MCF 10A (cell line): ENCODE measurements at regions of chr14 and their contacts with region 1.

Region 1: GRCh38 chr14:65019944-65020566 is 33.4 kb downstream of the FNTB start:
- DNase-seq: peak; percentile 51
- H3K4me3 Mint-ChIP-seq: no peak overlapping the region
- H3K27ac Mint-ChIP-seq: no peak overlapping the region
- H3K4me1 Mint-ChIP-seq: no peaks in the 10 kb centered on the region
- H3K27me3 Mint-ChIP-seq: no peaks in the 10 kb centered on the region
- CTCF ChIP-seq: peak; percentile 52

Region 2: GRCh38 chr14:64478634-64479250 is 541.3 kb before region 1 on chr14:
- CTCF ChIA-PET with region 1: no interaction called
- POLR2A ChIA-PET with region 1: no interaction called
- intact Hi-C with region 1: no loop called
- DNase-seq: peak; percentile 40
- H3K4me3 Mint-ChIP-seq: no peak overlapping the region
- H3K27ac Mint-ChIP-seq: no peak overlapping the region
- H3K4me1 Mint-ChIP-seq: peaks cover 6% of the 10 kb centered on the region
- H3K27me3 Mint-ChIP-seq: no peaks in the 10 kb centered on the region
- CTCF ChIP-seq: peak; percentile 35

Region 3: GRCh38 chr14:64974563-64974962 is 45.5 kb before region 1 on chr14:
- CTCF ChIA-PET with region 1: no interaction called
- POLR2A ChIA-PET with region 1: no interaction called
- intact Hi-C with region 1: no loop called
- DNase-seq: no peak
- H3K4me3 Mint-ChIP-seq: no peak overlapping the region
- H3K27ac Mint-ChIP-seq: no peak overlapping the region
- H3K4me1 Mint-ChIP-seq: no peaks in the 10 kb centered on the region
- H3K27me3 Mint-ChIP-seq: peaks cover 18% of the 10 kb centered on the region
- CTCF ChIP-seq: no peak

Region 4: DNA sequence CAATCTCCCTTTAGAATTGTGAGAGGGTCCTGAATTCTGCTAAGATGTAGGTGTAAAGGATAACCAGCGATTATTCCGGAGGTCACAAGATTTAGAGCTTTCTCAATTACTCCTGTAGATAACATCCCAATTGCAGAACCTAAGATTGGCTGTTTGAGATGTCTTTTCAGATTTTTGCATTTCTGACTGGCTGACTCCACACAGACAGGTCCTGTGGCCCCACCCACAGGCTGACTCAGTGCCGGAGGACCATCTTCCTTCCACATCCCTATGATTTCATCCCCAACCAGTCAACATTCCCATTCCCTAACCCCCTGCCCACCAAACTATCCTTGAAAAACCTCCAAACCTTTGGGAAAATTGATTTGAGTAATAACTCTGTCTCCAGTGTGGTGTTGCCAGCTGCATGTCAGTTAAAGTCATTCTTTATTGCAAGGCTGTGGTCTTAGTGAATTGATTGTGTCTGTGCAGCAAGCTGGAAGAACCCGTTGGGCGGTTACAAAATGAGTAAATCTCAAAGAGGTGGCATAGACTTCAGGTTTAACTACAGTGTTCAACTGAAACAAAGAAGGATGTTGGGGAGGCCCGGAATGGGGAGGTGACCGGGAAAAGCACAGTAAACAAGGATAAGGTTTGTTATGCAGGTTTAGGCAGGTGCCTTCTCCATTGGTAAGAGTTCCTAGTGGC is 22.8 kb before region 1 on chr14:
- CTCF ChIA-PET with region 1: interaction called, 18 read pairs
- POLR2A ChIA-PET with region 1: interaction called, 4 read pairs
- intact Hi-C with region 1: no loop called
- DNase-seq: no peak
- H3K4me3 Mint-ChIP-seq: no peak overlapping the region
- H3K27ac Mint-ChIP-seq: no peak overlapping the region
- H3K4me1 Mint-ChIP-seq: peaks cover 5% of the 10 kb centered on the region
- H3K27me3 Mint-ChIP-seq: no peaks in the 10 kb centered on the region
- CTCF ChIP-seq: no peak

Region 5: GRCh38 chr14:65002586-65003210 is 17.4 kb before region 1 on chr14:
- CTCF ChIA-PET with region 1: interaction called, 15 read pairs
- POLR2A ChIA-PET with region 1: interaction called, 5 read pairs
- intact Hi-C with region 1: no loop called
- DNase-seq: no peak
- H3K4me3 Mint-ChIP-seq: no peak overlapping the region
- H3K27ac Mint-ChIP-seq: no peak overlapping the region
- H3K4me1 Mint-ChIP-seq: peaks cover 23% of the 10 kb centered on the region
- H3K27me3 Mint-ChIP-seq: no peaks in the 10 kb centered on the region
- CTCF ChIP-seq: no peak

Region 6: DNA sequence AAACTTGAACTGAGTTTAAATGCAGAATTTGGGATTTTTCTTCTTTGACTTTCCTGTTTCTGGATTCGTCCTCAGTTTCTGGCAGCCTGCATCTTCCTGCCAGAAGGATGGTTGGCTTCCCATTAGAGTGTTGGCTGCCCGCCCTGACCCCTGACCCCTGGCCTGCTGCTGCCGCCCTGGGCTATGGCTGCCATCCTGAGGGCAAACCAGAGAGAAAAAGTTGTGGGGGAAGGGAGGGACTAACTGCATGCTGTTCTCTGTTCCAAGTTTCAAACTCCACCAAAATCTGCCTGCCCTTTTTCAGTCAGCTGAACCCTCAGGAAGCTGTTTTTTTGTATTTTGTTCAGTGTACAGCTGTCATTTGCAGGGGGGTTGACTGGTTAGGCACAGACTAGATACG is 15.0 kb after region 1 on chr14:
- CTCF ChIA-PET with region 1: interaction called, 25 read pairs
- POLR2A ChIA-PET with region 1: interaction called, 3 read pairs
- intact Hi-C with region 1: no loop called
- DNase-seq: no peak
- H3K4me3 Mint-ChIP-seq: no peak overlapping the region
- H3K27ac Mint-ChIP-seq: no peak overlapping the region
- H3K4me1 Mint-ChIP-seq: peaks cover 5% of the 10 kb centered on the region
- H3K27me3 Mint-ChIP-seq: no peaks in the 10 kb centered on the region
- CTCF ChIP-seq: no peak

Region 7: GRCh38 chr14:65222440-65222858 is 202.4 kb after region 1 on chr14:
- CTCF ChIA-PET with region 1: no interaction called
- POLR2A ChIA-PET with region 1: no interaction called
- intact Hi-C with region 1: no loop called
- DNase-seq: peak; percentile 71
- H3K4me3 Mint-ChIP-seq: no peak overlapping the region
- H3K27ac Mint-ChIP-seq: peak overlapping the region; percentile 77
- H3K4me1 Mint-ChIP-seq: peaks cover 27% of the 10 kb centered on the region
- H3K27me3 Mint-ChIP-seq: no peaks in the 10 kb centered on the region
- CTCF ChIP-seq: peak; percentile 88